HCT116 (cell line): ENCODE measurements at regions of chr18 and their contacts with region 1.

Region 1: DNA sequence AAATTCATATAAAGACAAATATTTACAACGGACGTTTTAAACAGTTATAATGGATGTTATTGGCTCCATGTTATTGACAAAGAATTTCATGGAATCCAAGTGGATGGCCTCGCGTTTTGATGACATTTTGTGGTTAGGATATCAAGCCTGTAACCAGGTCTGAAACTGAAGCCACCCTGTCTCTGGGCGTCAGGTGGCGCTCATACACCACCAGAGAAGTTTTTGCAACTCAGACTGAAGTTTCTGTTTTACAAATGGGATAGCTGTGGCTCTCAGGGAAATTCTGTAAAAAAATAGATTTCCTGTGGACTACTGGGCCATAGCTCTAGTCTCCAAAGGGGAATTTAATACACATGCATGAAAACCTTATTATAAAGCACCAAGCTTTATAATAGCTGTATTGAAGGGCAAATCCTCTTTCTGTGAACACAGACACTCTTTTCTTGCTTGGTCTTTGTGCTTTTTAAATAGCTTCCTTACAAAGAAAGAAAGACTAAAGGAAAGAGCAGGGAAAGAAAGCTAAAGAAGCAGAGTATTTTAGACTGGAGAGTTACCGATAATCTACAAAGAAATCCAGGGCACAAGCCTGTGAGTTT is 86.7 kb downstream of the C18orf54 start:
- DNase-seq: peak; percentile 60
- ATAC-seq: peak; percentile 91
- H3K4me3 ChIP-seq: no peak overlapping the region
- H3K27ac ChIP-seq: no peak overlapping the region
- H3K4me1 ChIP-seq: no peaks in the 10 kb centered on the region
- H3K27me3 ChIP-seq: no peaks in the 10 kb centered on the region
- CTCF ChIP-seq: peak; percentile 73 to 89 (median 82); a peak in 5 of 6 replicates
- POLR2A ChIP-seq: no peak
- RAD21 ChIP-seq: peak; percentile 90

Region 2: GRCh38 chr18:54647176-54647575 is 202.8 kb after region 1 on chr18:
- CTCF ChIA-PET with region 1: interaction called, 7 read pairs
- POLR2A ChIA-PET with region 1: no interaction called
- RAD21 ChIA-PET with region 1: interaction called, 3 read pairs
- intact Hi-C with region 1: loop called (anchors 1 kb)
- DNase-seq: peak; percentile 34
- ATAC-seq: peak; percentile 80
- H3K4me3 ChIP-seq: no peak overlapping the region
- H3K27ac ChIP-seq: no peak overlapping the region
- H3K4me1 ChIP-seq: no peaks in the 10 kb centered on the region
- H3K27me3 ChIP-seq: no peaks in the 10 kb centered on the region
- CTCF ChIP-seq: peak; percentile 54 to 67 (median 66)
- POLR2A ChIP-seq: no peak
- RAD21 ChIP-seq: peak; percentile 73

Region 3: DNA sequence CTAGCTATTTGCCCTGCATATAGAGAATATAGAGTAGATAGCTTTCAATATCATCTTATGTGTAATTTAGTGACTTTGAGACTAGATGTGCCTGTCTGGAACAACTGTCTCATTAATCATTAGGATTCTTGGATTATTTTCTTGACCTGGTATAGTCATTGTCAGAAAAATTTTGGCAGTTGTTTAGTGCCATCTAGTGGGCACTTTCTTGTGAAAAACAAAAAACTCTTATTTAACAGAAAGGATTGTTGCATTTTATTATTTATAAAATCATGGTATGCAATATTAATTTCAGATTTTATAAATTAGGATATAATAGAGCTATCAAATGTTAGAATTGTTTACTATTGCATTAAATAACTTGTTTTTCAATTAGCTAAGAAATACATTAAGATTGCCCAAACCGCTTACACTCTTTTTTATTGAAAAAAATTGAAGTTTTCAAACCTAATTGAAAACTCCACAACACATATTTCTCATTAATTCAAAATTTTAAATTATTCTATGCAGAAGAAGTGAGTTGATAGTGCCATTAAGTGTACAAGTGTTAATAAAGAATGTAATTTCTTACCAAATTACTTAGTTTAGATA is 227.0 kb after region 1 on chr18:
- CTCF ChIA-PET with region 1: interaction called, 35 read pairs
- POLR2A ChIA-PET with region 1: no interaction called
- RAD21 ChIA-PET with region 1: interaction called in 1 of 2 experiments, 4 read pairs
- intact Hi-C with region 1: loop called (anchors 1 kb)
- DNase-seq: peak; percentile 24
- ATAC-seq: no peak
- H3K4me3 ChIP-seq: no peak overlapping the region
- H3K27ac ChIP-seq: no peak overlapping the region
- H3K4me1 ChIP-seq: no peaks in the 10 kb centered on the region
- H3K27me3 ChIP-seq: no peaks in the 10 kb centered on the region
- CTCF ChIP-seq: peak; percentile 41 to 58 (median 56); a peak in 5 of 6 replicates
- POLR2A ChIP-seq: no peak
- RAD21 ChIP-seq: peak; percentile 75

Region 4: GRCh38 chr18:54983041-54983686 is 538.7 kb after region 1 on chr18:
- CTCF ChIA-PET with region 1: interaction called, 4 read pairs
- POLR2A ChIA-PET with region 1: no interaction called
- RAD21 ChIA-PET with region 1: no interaction called
- intact Hi-C with region 1: loop called (anchors 2 kb)
- DNase-seq: peak; percentile 47
- ATAC-seq: peak; percentile 96
- H3K4me3 ChIP-seq: no peak overlapping the region
- H3K27ac ChIP-seq: no peak overlapping the region
- H3K4me1 ChIP-seq: peaks cover 0 to 4% of the 10 kb centered on the region in 2 experiments; a peak in 1 of 4 replicates
- H3K27me3 ChIP-seq: no peaks in the 10 kb centered on the region
- CTCF ChIP-seq: peak; percentile 46 to 74 (median 67); a peak in 5 of 6 replicates
- POLR2A ChIP-seq: no peak
- RAD21 ChIP-seq: peak; percentile 86